ENCODE measurements at regions of chr13 and their contacts with region 1.

Region 1: GRCh38 chr13:37109051-37109678 is 3.7 kb upstream of the CSNK1A1L start:
- DNase-seq: peak; percentile 19
- H3K4me3 ChIP-seq: no peak overlapping the region
- H3K27ac ChIP-seq: no peak overlapping the region
- H3K4me1 ChIP-seq: no peaks in the 10 kb centered on the region
- H3K27me3 ChIP-seq: no peaks in the 10 kb centered on the region
- CTCF ChIP-seq: peak; percentile 57 to 70

Region 2: GRCh38 chr13:37270226-37271001 is 161.2 kb after region 1 on chr13:
- CTCF ChIA-PET with region 1: no interaction called
- dilution Hi-C with region 1: no loop called
- in situ Hi-C with region 1: no loop called
- intact Hi-C with region 1: no loop called
- DNase-seq: no peak
- H3K4me3 ChIP-seq: no peak overlapping the region
- H3K27ac ChIP-seq: no peak overlapping the region
- H3K4me1 ChIP-seq: peaks cover 7% of the 10 kb centered on the region
- H3K27me3 ChIP-seq: no peaks in the 10 kb centered on the region
- CTCF ChIP-seq: no peak

Region 3: GRCh38 chr13:37602747-37603381 is 493.7 kb after region 1 on chr13:
- CTCF ChIA-PET with region 1: no interaction called
- dilution Hi-C with region 1: no loop called
- in situ Hi-C with region 1: loop called (anchors 5 to 10 kb)
- intact Hi-C with region 1: loop called (anchors 1 kb)
- DNase-seq: no peak
- H3K4me3 ChIP-seq: no peak overlapping the region
- H3K27ac ChIP-seq: no peak overlapping the region
- H3K4me1 ChIP-seq: peaks cover 3% of the 10 kb centered on the region
- H3K27me3 ChIP-seq: no peaks in the 10 kb centered on the region
- CTCF ChIP-seq: peak; percentile 32 to 63

Measured in mammary epithelial cell (primary cell).